Activated CD4-positive, alpha-beta memory T cell treated with anti-CD3 and anti-CD28 coated beads, Interleukin-2, amount 10 ng/mL, durations not matched to agents 7 days and 5 days (primary cell): ENCODE measurements at regions of chr19 and their contacts with region 1.

Region 1: GRCh38 chr19:18000935-18001778 is 6.8 kb upstream of the ARRDC2 start:
- DNase-seq: peak; percentile 94
- H3K4me3 Mint-ChIP-seq: peak overlapping the region; percentile 94
- H3K27ac Mint-ChIP-seq: peak overlapping the region; percentile 99
- H3K4me1 Mint-ChIP-seq: peaks cover 35% of the 10 kb centered on the region
- H3K27me3 Mint-ChIP-seq: peaks cover 2% of the 10 kb centered on the region

Region 2: DNA sequence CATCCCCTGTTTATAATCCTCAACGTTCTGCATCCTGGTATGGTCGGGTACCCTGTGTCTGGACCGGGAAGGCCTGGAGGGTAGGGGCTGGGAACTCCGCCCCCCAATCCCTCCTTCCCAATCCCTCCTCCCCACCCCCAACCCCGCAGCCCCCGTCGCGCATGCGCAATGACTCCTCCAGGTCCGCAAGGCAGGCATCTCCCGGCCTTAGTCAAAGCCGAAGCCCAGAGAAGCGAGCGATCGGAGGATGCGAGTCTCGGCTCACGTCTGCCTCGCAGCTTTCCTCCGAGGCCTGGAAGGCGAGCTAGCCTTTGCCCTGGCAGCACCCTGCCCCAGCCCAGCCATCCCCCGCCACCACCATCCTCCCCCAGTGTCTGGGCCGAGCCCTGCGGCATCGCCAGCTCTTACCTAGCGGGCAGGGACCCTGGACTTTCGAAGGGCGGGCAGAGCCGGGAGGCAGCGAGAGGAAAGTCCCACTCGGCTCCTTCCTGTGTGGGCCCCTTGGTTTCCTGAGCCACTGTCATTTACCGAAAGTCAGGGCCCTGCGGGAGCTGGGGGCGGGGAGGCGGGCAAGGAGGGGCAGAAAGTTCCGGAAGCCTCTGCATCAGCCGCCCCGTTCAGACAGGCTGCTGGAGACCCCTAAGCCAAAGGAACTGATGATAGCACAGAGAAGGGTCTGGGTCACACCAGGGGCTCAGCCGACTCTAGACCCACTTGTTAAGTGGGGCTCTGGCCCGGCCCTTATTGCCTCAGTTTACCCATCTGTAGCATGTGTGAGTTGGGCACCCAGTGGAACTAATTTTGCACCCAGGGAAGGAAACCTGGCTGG is 153.4 kb before region 1 on chr19 and contains the start of gene JAK3:
- CTCF ChIA-PET with region 1: no interaction called
- POLR2A ChIA-PET with region 1: interaction called, 12 read pairs
- DNase-seq: peak; percentile 91
- H3K4me3 Mint-ChIP-seq: peak within 1 kb of the TSS; percentile 94
- H3K27ac Mint-ChIP-seq: peak within 1 kb of the TSS; percentile 93
- H3K4me1 Mint-ChIP-seq: peaks cover 72% of the 10 kb centered on the region
- H3K27me3 Mint-ChIP-seq: no peaks in the 10 kb centered on the region
- total RNA-seq, gene JAK3: 233 to 237 TPM

Region 3: DNA sequence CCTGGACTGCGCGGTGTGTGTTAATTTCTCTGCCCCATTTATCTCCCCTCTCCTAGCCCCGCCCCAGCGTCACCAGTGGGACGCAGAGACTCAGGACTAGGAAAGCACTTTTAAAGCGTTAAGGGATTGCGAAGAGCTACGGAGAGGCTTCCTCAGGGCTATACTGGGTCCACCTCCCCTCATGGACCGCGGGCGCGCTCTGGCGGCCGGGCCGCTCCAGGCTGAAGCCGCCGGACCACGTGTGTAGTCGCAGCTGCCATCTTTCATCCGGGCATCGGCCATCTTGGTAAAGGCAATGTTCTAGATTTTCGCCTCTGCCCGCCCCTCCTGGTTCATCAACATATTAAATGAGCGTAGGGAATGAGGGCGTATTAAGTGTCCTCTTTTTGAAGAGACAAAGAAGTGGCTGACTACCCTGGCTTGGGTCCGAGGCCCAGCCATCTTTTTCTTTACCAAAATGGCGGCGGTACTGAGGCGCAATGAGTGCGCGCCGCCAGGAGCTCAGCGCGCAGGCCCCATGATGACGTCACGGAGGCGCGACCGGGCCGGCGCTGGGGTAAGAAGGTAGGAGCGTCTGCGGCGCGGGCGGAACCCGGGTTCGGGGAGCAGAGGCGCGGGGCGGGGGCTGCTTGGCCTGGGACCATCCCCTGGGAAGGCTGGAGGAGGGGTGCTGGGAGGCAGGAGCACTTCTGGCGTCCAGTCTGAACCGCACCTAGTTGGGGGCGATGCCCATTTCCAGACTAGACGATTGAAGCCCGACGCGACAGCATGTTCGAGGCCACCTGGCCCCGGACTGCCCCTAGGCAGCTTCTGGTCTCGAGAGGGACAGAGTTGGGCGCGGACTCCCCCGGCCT is 68.4 kb before region 1 on chr19 and contains the start of gene CCDC124:
- CTCF ChIA-PET with region 1: interaction called, 148 read pairs
- POLR2A ChIA-PET with region 1: interaction called, 11 read pairs
- DNase-seq: peak; percentile 95
- H3K4me3 Mint-ChIP-seq: peak within 1 kb of the TSS; percentile 81
- H3K27ac Mint-ChIP-seq: peak within 1 kb of the TSS; percentile 87
- H3K4me1 Mint-ChIP-seq: peaks cover 36% of the 10 kb centered on the region
- H3K27me3 Mint-ChIP-seq: no peaks in the 10 kb centered on the region
- total RNA-seq, gene CCDC124: 59.3 to 60.8 TPM

Region 4: DNA sequence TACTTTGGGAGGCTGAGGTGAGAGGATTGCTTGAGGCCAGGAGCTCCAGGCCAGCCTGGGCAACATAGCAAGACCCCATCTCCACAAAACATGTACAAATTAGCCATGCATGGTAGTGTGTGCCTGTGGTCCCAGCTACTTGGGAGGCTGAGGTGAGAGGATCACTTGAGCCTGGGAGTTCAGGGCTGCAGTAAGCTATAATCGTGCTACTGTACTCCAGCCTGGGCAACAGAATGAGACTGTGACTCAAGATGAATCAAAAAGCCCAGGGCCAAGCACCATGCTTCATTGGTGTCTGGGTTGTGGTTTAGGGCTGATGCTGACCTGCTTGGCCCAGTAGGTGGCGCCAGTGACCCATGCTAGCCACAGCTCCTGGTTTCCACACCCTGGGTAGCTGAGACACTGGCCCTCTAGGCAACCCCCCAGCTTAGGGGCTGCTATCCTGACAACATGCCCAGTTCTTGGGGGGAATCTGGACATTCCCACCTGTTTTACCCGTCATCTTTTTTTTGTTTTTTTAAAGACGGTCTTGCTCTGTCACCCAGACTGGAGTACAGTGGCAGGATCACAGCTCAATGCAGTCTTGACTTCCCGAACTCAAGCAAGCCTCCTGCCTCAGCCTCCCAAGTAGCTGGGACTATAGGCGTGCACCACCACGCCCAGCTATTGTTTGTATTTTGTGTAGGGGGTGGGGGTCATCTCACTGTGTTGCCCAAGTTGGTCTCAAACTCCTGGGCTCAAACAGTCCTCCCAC is 62.9 kb before region 1 on chr19:
- CTCF ChIA-PET with region 1: interaction called, 148 read pairs
- POLR2A ChIA-PET with region 1: interaction called, 11 read pairs
- DNase-seq: peak; percentile 87
- H3K4me3 Mint-ChIP-seq: no peak overlapping the region
- H3K27ac Mint-ChIP-seq: no peak overlapping the region
- H3K4me1 Mint-ChIP-seq: peaks cover 8% of the 10 kb centered on the region
- H3K27me3 Mint-ChIP-seq: no peaks in the 10 kb centered on the region

Region 5: DNA sequence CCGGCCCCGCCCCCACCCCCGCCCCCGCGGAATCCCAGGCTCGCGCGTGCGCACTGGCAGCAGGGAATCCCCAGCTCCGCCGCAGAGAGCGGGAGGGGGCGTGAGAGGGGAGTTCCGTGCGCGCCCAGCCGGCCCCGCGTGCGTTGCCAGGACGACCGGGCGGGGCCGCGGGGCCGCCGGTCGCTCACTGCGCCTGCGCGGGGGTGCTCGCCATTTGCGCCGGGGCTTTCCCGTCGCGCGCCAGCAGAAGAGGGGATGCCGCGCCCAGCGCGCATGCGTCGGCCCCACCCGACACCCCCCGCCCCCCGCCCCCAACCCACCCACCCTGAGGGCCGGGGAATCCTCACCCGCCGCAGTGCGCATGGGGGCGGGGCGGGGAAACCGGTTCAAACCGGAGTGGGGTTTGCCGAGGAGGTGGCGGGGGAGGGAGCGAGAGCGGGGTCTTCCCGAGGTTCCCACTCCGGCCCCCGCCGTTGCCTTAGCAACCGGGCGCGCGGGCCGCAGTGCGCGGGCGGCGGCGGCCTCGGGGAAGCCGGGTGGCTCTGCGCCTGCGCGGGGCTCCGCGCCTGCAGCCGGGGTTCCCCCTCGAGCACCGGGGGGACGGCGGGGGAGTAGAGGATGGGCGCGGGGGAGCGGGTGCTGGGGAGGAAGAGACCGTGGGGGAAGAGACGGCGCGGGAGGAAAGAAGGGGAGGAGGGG is 53.2 kb before region 1 on chr19:
- CTCF ChIA-PET with region 1: interaction called, 55 read pairs
- POLR2A ChIA-PET with region 1: interaction called, 5 read pairs
- DNase-seq: peak; percentile 95
- H3K4me3 Mint-ChIP-seq: peak overlapping the region; percentile 76
- H3K27ac Mint-ChIP-seq: no peak overlapping the region
- H3K4me1 Mint-ChIP-seq: peaks cover 38% of the 10 kb centered on the region
- H3K27me3 Mint-ChIP-seq: peaks cover 38% of the 10 kb centered on the region

Region 6: GRCh38 chr19:18044825-18045304 is 43.7 kb after region 1 on chr19:
- CTCF ChIA-PET with region 1: interaction called, 4 read pairs
- POLR2A ChIA-PET with region 1: interaction called, 17 read pairs
- DNase-seq: peak; percentile 93
- H3K4me3 Mint-ChIP-seq: peak overlapping the region; percentile 35
- H3K27ac Mint-ChIP-seq: peak overlapping the region; percentile 71
- H3K4me1 Mint-ChIP-seq: peaks cover 33% of the 10 kb centered on the region
- H3K27me3 Mint-ChIP-seq: peaks cover 39% of the 10 kb centered on the region

Region 7: GRCh38 chr19:18091217-18091608 is 90.1 kb after region 1 on chr19:
- CTCF ChIA-PET with region 1: no interaction called
- POLR2A ChIA-PET with region 1: interaction called, 20 read pairs
- DNase-seq: peak; percentile 88
- H3K4me3 Mint-ChIP-seq: peak overlapping the region; percentile 15
- H3K27ac Mint-ChIP-seq: peak overlapping the region; percentile 98
- H3K4me1 Mint-ChIP-seq: peaks cover 64% of the 10 kb centered on the region
- H3K27me3 Mint-ChIP-seq: no peaks in the 10 kb centered on the region